ENCODE measurements at regions of chr4 and their contacts with region 1.

Region 1: DNA sequence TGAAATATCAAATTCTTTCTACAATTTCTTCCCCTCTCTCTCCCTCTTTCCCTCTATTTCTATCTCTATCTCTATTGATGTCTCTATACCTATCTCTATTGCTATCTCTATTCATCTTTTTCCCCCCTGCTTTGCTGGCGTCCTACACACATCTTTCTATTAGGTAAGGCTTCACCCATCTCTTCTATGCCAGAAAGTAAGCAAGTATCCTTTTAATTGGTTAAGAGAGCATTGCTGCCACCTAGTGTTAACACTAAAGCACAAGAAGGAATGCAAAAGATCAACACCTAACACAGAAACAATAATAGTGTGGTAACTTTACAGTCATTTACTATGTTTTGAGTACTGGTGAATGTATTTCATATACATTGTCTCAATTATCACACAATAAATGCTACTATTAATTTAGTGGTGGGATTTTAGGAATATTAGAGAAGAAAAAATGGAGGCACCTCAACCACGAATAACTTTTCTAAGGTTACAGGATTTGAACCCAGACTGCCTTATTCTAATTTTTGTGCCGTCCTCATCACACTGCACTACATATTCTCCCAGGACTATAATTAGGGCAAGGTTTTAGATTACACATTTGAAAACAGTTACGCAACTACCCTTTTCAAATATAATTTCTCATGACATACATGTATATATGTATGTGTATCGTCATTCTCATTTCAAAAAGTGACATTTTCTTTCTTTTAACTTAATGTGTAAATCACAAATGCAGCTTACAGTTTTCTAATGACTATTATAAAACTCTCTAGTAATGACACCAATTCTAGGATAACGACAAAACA is 3.7 kb upstream of the C4orf36 start:
- DNase-seq: peak; percentile 71
- ATAC-seq: peak; percentile 39
- H3K4me3 ChIP-seq: no peak overlapping the region
- H3K27ac ChIP-seq: no peak overlapping the region
- H3K4me1 ChIP-seq: peaks cover 12% of the 10 kb centered on the region; the same call in 1 of the 2 replicates
- H3K27me3 ChIP-seq: no peaks in the 10 kb centered on the region
- CTCF ChIP-seq: peak; percentile 84
- EP300 ChIP-seq: no peak
- POLR2A ChIP-seq: no peak
- RAD21 ChIP-seq: peak; percentile 61

Region 2: GRCh38 chr4:86497980-86498862 is 397.7 kb before region 1 on chr4:
- CTCF ChIA-PET with region 1: interaction called, 25 read pairs
- POLR2A ChIA-PET with region 1: no interaction called
- in situ Hi-C with region 1: loop called (anchors 5 kb)
- intact Hi-C with region 1: loop called (anchors 1 kb)
- DNase-seq: peak; percentile 7
- ATAC-seq: peak; percentile 92
- H3K4me3 ChIP-seq: no peak overlapping the region
- H3K27ac ChIP-seq: no peak overlapping the region
- H3K4me1 ChIP-seq: no peaks in the 10 kb centered on the region
- H3K27me3 ChIP-seq: no peaks in the 10 kb centered on the region
- CTCF ChIP-seq: peak; percentile 69
- EP300 ChIP-seq: no peak
- POLR2A ChIP-seq: no peak
- RAD21 ChIP-seq: no peak

Region 3: DNA sequence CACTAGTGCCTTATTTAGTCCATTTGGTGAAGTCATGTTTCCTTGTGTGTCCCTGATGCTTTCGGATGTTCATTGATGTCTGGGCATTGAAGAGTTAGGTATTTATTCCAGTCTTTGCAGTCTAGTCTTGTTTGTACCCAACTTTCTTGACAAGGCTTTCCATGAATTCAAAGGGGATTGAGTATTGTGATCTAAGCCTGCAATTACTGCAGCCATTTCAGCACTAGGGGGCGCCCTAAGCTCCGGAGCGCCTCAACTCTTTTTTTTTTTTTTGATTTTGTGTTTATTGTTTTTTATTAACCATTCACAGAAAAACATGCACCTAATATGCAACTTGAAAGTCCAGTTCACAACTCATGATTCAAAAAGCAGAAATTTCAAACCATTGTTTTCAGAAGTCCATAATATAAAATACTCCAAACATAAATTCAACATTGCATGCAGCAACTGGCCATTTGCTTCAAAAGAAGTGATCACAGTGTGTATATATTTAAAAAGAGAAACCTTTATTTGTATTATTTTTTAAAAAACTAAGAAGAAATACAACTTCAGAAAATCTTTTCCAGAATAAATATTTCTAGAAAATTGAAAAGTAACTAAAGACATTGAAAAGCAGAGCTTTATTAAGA is 242.5 kb before region 1 on chr4:
- CTCF ChIA-PET with region 1: no interaction called
- POLR2A ChIA-PET with region 1: no interaction called
- in situ Hi-C with region 1: no loop called
- intact Hi-C with region 1: loop called (anchors 2 kb)
- DNase-seq: peak; percentile 3
- ATAC-seq: no peak
- H3K4me3 ChIP-seq: no peak overlapping the region
- H3K27ac ChIP-seq: no peak overlapping the region
- H3K4me1 ChIP-seq: no peaks in the 10 kb centered on the region
- H3K27me3 ChIP-seq: no peaks in the 10 kb centered on the region
- CTCF ChIP-seq: peak; percentile 23; the same call in 1 of the 2 replicates
- EP300 ChIP-seq: no peak
- POLR2A ChIP-seq: no peak
- RAD21 ChIP-seq: no peak

Region 4: GRCh38 chr4:86791126-86791525 is 104.8 kb before region 1 on chr4:
- CTCF ChIA-PET with region 1: interaction called, 14 read pairs
- POLR2A ChIA-PET with region 1: no interaction called
- in situ Hi-C with region 1: loop called (anchors 5 kb)
- intact Hi-C with region 1: loop called (anchors 1 kb)
- DNase-seq: peak; percentile 88
- ATAC-seq: peak; percentile 100
- H3K4me3 ChIP-seq: no peak overlapping the region
- H3K27ac ChIP-seq: no peak overlapping the region
- H3K4me1 ChIP-seq: no peaks in the 10 kb centered on the region
- H3K27me3 ChIP-seq: no peaks in the 10 kb centered on the region; a peak in 1 of 5 replicates
- CTCF ChIP-seq: peak; percentile 73
- EP300 ChIP-seq: no peak
- POLR2A ChIP-seq: no peak
- RAD21 ChIP-seq: peak; percentile 75

Region 5: GRCh38 chr4:87235020-87235671 is 339.3 kb after region 1 on chr4:
- CTCF ChIA-PET with region 1: no interaction called
- POLR2A ChIA-PET with region 1: no interaction called
- in situ Hi-C with region 1: loop called (anchors 10 kb)
- intact Hi-C with region 1: no loop called
- DNase-seq: no peak
- ATAC-seq: peak; percentile 46
- H3K4me3 ChIP-seq: peak overlapping the region in 2 of 3 experiments; percentile 58 to 69; a peak in 4 of 6 replicates
- H3K27ac ChIP-seq: no peak overlapping the region
- H3K4me1 ChIP-seq: peaks cover 20% of the 10 kb centered on the region
- H3K27me3 ChIP-seq: peaks cover 0 to 2% of the 10 kb centered on the region in 2 experiments; a peak in 1 of 5 replicates
- CTCF ChIP-seq: no peak
- EP300 ChIP-seq: no peak
- POLR2A ChIP-seq: no peak
- RAD21 ChIP-seq: no peak